Esophagus muscularis mucosa (tissue), 4 donors: ENCODE measurements at regions of chr6 and their contacts with region 1.

Region 1: GRCh38 chr6:143575440-143575839 is 63.9 kb upstream of the FUCA2 start:
- DNase-seq: no peak
- H3K4me3 ChIP-seq: no peak overlapping the region
- H3K27ac ChIP-seq: no peak overlapping the region
- H3K4me1 ChIP-seq: peaks cover 0 to 8% (median 2%) of the 10 kb centered on the region in 4 donors
- H3K27me3 ChIP-seq: no peaks in the 10 kb centered on the region
- CTCF ChIP-seq: peak; percentile 92 to 97 (median 92)
- EP300 ChIP-seq: no peak
- POLR2A ChIP-seq: no peak

Region 2: DNA sequence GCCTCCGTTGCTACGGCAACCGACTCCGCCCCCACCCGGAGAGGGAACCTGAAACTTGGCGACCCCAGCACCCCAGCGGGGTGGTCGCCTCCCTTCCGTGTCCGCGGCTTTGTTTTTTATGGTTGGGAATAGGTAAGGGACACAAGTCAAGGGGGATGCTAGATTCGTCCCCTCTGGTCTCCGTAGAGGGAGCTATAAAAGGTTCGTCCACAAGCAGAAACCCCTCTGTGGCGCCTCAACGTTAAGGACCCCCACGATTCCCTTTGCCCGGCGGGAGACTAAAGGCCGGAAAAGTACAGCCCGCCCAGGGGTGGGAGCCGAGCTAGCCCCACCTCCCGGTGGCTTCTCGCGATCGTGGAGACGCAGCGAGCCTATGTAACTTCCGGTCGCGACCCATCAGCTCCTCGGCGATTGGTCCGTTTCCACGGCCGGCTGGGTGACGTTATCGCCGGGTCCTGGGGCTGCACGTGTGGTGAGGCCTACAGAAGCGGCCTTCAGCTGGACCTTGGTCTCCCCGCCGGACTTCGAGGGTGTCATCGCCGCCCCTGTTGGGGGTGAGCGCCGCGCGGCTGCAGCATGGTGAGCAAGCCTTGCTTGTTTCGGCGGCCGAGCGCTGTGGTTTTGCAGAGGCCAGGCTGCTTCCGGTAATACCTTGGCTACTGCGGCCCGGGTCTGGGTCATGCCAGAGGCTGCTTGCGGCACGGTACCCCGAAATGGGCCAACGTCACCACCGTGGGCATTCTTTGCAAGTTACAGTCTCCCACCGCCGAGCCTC is 267.6 kb after region 1 on chr6 and contains the start of gene LTV1:
- intact Hi-C with region 1: loop called (anchors 5 kb)
- DNase-seq: peak; percentile 99
- H3K4me3 ChIP-seq: peak within 1 kb of the TSS; percentile 73 to 86 (median 78)
- H3K27ac ChIP-seq: peak within 1 kb of the TSS; percentile 92 to 96 (median 95)
- H3K4me1 ChIP-seq: peaks cover 11 to 31% (median 22%) of the 10 kb centered on the region in 4 donors
- H3K27me3 ChIP-seq: no peaks in the 10 kb centered on the region
- CTCF ChIP-seq: peak in 1 of 3 experiments; percentile 17
- EP300 ChIP-seq: no peak
- POLR2A ChIP-seq: peak; percentile 18
- total RNA-seq, gene LTV1: 15.0 to 20.0 (median 18.0) TPM